Transverse colon (tissue), 4 donors: ENCODE measurements at regions of chr3 and their contacts with region 1.

Region 1: GRCh38 chr3:38758557-38758956 is 57.5 kb downstream of the SCN10A start:
- DNase-seq: no peak
- H3K4me3 ChIP-seq: no peak overlapping the region
- H3K27ac ChIP-seq: no peak overlapping the region
- H3K4me1 ChIP-seq: no peaks in the 10 kb centered on the region
- H3K27me3 ChIP-seq: no peaks in the 10 kb centered on the region
- CTCF ChIP-seq: no peak
- EP300 ChIP-seq: no peak
- POLR2A ChIP-seq: no peak

Region 2: GRCh38 chr3:38374221-38374620 is 384.3 kb before region 1 on chr3:
- in situ Hi-C with region 1: no loop called
- intact Hi-C with region 1: no loop called
- DNase-seq: no peak
- H3K4me3 ChIP-seq: no peak overlapping the region
- H3K27ac ChIP-seq: no peak overlapping the region
- H3K4me1 ChIP-seq: no peaks in the 10 kb centered on the region
- H3K27me3 ChIP-seq: no peaks in the 10 kb centered on the region
- CTCF ChIP-seq: no peak
- EP300 ChIP-seq: no peak
- POLR2A ChIP-seq: no peak

Region 3: DNA sequence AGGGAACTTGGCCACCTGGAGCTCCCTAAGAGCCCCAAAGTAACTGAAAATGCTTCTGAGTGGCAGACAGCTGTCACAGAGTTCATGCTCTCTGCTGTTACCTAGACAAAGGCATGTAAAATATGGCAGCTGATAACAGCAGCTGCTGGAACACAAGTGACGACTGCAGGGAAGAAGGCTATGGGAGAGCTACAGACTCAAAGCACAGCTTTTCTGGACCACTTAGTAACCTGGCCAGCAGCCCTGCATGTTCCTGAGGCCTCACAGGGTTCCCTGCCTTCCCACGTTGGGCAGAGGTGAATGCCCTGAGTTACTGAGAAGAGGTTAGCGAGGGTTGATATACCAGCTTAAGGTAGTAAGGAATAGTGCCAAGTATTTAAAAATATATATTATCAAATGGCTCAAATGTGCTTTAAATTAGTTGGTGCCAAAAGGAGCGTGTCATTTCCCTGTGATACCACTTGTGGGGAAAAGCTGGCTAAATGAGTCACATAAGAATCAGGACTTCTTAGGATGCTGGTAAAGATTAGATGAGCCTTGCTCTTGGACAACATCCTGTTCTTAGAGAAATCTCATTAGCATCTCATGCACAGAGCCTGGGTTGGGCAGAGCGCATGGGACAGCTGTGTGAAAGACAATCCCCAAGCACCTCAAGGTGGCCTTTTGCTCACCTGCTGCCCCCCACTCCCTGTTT is 32.7 kb before region 1 on chr3:
- in situ Hi-C with region 1: no loop called
- intact Hi-C with region 1: loop called (anchors 2 kb)
- DNase-seq: no peak
- H3K4me3 ChIP-seq: no peak overlapping the region
- H3K27ac ChIP-seq: no peak overlapping the region
- H3K4me1 ChIP-seq: no peaks in the 10 kb centered on the region
- H3K27me3 ChIP-seq: no peaks in the 10 kb centered on the region
- CTCF ChIP-seq: no peak
- EP300 ChIP-seq: no peak
- POLR2A ChIP-seq: no peak